ENCODE measurements at regions of chr11 and their contacts with region 1.

Region 1: DNA sequence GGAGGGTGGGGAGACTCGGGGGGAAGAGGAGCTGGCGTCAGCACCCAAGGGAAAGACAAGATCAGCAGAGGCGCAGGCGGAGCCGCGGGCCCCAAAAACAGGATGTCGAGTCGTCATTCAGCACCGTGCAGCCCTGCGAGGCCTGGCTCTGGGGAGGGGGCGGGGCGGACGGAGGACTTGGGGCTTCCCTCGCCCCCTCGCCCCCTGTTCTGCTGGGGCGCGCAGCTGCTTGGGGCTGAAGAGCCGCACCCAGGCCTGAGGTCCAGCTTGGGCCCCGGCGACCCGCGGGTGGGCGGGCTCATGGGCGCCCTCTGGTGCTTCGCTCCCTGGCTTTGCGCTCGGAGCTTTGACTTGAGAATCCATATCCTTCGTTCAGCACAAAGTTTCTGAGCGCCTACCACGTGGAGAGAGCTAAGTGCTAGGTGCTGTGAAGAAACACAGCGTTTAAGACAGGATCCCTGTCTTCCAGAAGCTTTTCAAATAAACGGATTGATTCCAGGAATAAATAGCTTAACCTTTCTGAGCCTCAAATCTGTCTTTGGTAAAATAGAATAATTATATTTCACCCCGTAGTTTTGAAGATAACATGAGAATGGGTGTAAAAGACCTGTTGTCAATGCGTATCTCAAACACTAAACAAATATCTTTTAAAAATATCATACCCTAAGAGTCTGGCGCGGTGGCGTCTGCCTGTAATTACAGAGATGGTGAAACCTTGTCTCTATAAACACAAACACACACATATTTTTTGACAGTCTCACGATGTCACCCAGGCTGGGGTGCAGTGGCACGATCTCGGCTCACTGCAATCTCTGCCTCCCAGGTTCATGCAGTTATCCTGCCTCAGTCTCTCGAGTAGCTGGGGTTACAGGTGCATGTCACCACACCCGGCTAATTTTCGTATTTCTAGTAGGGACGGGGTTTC is 929 bp upstream of the RHOG start:
- DNase-seq: peak; percentile 84
- ATAC-seq: peak; percentile 66
- H3K4me3 Mint-ChIP-seq: peak overlapping the region; percentile 72
- H3K27ac Mint-ChIP-seq: no peak overlapping the region
- H3K4me1 Mint-ChIP-seq: peaks cover 36% of the 10 kb centered on the region
- H3K27me3 Mint-ChIP-seq: peaks cover 9% of the 10 kb centered on the region
- CTCF ChIP-seq: peak; percentile 58

Region 2: GRCh38 chr11:3609416-3610265 is 232.0 kb before region 1 on chr11:
- CTCF ChIA-PET with region 1: no interaction called
- POLR2A ChIA-PET with region 1: no interaction called
- DNase-seq: no peak
- ATAC-seq: peak; percentile 93
- H3K4me3 Mint-ChIP-seq: no peak overlapping the region
- H3K27ac Mint-ChIP-seq: no peak overlapping the region
- H3K4me1 Mint-ChIP-seq: no peaks in the 10 kb centered on the region
- H3K27me3 Mint-ChIP-seq: no peaks in the 10 kb centered on the region
- CTCF ChIP-seq: peak; percentile 92

Region 3: GRCh38 chr11:3824714-3825472 is 16.8 kb before region 1 on chr11:
- CTCF ChIA-PET with region 1: interaction called, 71 read pairs
- POLR2A ChIA-PET with region 1: interaction called, 6 read pairs
- DNase-seq: peak; percentile 94
- ATAC-seq: peak; percentile 92
- H3K4me3 Mint-ChIP-seq: no peak overlapping the region
- H3K27ac Mint-ChIP-seq: peak overlapping the region; percentile 26
- H3K4me1 Mint-ChIP-seq: peaks cover 41% of the 10 kb centered on the region
- H3K27me3 Mint-ChIP-seq: no peaks in the 10 kb centered on the region
- CTCF ChIP-seq: peak; percentile 87

Measured in WTC11 (cell line).